Posterior cingulate gyrus (tissue), 11 donors: ENCODE measurements at regions of chr1 and their contacts with region 1.

Region 1: DNA sequence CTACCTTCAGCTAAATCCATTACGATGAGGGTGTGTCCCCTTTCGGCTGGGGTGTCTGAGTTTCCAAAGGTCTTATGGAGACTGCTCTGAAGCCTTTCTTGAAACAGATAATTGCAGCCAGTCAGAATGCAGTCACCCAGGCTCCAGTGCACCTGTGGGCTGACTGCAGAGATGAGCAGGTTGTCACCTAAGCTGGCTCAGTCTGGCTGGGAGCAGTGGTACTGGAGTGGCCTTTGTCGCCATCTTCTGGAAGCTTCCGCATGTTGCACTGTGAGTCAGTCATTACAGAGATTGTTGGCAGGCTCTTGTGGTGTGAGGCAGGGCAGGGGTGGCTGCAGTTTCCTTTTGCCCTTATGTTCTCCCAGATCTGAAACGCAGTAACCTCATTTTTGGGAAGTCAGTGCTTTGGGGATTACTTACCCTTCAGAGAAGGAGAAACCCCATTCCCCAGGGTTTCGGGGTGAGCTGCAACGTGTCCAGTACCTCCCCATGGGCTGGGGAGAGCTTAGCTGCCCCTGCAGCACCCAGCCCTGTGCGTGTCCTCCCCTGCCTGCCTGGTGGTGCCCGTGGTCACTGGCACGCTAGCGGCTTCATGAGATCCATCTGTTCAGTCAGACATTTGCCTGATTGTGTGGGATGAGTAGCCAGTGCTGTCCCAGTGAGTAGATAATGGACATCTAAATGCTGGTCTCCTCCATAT is 48.0 kb downstream of the SMYD2 start:
- DNase-seq: peak; percentile 65 to 97 (median 84)

Region 2: GRCh38 chr1:214213136-214213535 is 115.8 kb before region 1 on chr1:
- intact Hi-C with region 1: loop called (anchors 1 kb)
- DNase-seq: no peak

Region 3: GRCh38 chr1:214261206-214262123 is 67.5 kb before region 1 on chr1:
- intact Hi-C with region 1: loop called (anchors 1 kb)
- DNase-seq: peak; percentile 64 to 97 (median 87)

Region 4: DNA sequence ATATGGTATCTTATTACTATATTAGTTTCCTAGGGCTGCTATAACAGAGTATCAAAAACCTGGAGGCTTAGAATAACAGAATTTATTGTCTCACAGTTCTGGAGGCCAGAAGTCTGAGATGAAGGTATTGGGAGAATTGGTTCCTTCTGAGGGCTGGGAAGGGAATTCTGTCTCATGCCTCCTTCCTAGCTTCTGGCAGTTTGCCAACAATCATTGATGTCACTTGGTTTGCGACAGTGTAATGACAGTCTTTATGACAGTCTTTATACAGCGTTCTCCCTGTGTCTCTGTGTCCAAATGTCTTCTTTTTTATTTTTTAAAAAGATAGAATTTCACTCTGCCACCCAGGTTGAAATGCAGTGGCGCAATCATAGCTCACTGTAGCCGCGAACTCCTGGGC is 258.2 kb after region 1 on chr1:
- intact Hi-C with region 1: loop called (anchors 2 kb)
- DNase-seq: no peak